ENCODE measurements at regions of chr14 and their contacts with region 1.

Region 1: DNA sequence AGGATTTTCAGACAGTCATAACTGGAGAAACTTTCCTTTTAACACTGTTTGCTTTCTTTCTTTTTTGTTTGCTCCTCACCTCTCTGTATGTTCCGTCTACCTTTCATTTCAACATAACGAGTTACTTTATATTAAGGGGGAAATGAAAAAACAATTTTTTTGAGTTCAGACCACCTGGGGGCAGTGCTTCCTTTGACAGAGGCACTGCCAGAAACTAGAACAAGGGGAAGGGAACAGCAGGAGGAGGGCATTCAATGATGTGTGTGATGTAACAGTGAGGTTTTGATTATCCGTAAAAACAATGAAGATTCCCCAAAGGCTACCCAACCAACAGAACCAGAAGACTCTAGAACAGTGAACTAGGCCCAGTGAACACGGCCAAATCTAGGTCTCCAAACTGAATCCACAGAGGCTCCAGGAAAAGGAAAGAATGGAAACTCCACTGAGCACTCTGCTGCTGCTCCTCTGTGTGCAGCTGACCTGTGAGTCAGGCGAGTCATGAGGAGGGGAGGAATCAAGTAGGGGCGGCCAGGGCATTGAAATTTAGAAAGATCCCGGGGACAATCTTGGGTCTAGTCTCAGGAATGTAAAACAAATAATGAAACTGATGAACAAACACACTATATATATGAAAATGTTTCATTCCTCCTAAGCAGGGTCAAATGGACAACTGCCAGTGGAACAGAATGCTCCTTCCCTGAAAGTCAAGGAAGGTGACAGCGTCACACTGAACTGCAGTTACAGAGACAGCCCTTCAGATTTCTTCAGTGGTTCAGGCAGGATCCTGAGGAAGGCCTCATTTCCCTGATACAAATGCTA is 323.5 kb downstream of the DAD1 start:
- DNase-seq: no peak
- ATAC-seq: peak in 2 of 8 donors; percentile 29 to 63
- H3K4me3 ChIP-seq: no peak overlapping the region
- H3K27ac ChIP-seq: no peak overlapping the region
- H3K4me1 ChIP-seq: peaks cover 0 to 7% (median 0%) of the 10 kb centered on the region in 9 donors
- H3K27me3 ChIP-seq: peaks cover 0 to 14% (median 0%) of the 10 kb centered on the region in 7 donors
- CTCF ChIP-seq: peak in 2 of 9 donors; percentile 6 to 17

Region 2: GRCh38 chr14:22280497-22281316 is 15.2 kb after region 1 on chr14:
- intact Hi-C with region 1: loop called in 1 of 10 experiments (anchors 1 kb)
- DNase-seq: no peak
- ATAC-seq: no peak
- H3K4me3 ChIP-seq: no peak overlapping the region
- H3K27ac ChIP-seq: no peak overlapping the region
- H3K4me1 ChIP-seq: peaks cover 0 to 19% (median 0%) of the 10 kb centered on the region in 9 donors
- H3K27me3 ChIP-seq: peaks cover 0 to 25% (median 9%) of the 10 kb centered on the region in 7 donors
- CTCF ChIP-seq: no peak

Region 3: DNA sequence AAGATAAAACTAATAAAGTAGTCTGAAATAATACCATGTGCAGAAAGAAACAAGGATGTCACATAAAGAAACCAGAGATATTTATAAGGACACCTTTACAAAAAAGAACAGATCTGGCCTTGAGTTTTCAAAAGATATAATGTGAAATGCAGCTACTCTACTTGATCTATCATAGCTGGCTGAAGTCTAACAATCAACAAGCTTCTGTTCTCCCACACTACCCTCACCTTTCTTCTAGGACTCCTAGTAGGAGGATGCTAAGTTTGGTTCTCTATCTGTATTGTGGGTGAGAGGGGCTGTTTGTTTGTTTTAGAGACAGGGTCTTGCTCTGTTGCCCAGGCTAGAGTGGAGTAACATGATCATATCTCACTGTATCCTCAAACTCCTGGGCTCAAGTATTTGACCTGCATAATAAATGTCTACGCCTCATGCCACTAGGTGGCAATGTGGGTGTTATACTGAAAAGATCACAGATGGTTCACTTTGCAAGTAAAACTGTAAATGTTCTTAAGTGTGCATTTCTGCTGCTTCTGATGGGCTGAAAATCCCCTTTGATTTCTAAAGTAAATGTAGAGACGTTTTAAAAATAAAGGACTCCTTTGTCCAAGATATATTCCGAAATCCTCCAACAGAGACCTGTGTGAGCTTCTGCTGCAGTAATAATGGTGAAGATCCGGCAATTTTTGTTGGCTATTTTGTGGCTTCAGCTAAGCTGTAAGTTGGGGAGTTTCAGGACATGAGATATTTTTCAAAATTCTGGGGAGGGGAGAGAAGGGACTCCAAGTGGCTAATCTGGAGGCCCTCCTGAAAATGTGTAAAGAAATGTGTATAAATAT is 54.2 kb after region 1 on chr14:
- intact Hi-C with region 1: no loop called
- DNase-seq: peak in 1 of 2 donors; percentile 59
- ATAC-seq: peak in 5 of 8 donors; percentile 48 to 65 (median 56)
- H3K4me3 ChIP-seq: no peak overlapping the region
- H3K27ac ChIP-seq: no peak overlapping the region
- H3K4me1 ChIP-seq: peaks cover 0 to 7% (median 0%) of the 10 kb centered on the region in 9 donors
- H3K27me3 ChIP-seq: peaks cover 0 to 6% (median 0%) of the 10 kb centered on the region in 7 donors
- CTCF ChIP-seq: peak; percentile 28 to 78 (median 72)